Right ventricle myocardium inferior (tissue), 1 donor: ENCODE measurements at regions of chrX and their contacts with region 1.

Region 1: GRCh38 chrX:68929332-68930150 is 100.7 kb downstream of the EFNB1 start:
- DNase-seq: no peak
- ATAC-seq: peak; percentile 29

Region 2: DNA sequence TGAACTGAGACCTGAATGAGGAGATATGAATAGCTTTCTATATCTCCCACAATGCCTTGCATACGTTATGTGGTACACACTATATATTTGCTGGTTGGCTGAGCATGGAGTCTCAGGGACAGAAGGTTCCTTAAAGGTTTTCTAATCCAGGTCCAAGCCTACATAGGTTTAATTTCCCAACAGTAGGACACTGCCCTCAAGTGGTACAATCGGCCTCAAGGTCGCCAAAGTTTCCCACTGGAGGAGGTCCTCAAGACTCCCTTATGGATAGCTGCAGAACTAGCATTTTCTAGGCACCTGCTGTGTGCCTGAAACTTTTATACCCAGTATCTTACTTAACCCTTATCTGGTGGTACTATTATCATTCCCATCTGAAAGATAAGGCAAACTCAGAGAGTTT is 121.7 kb before region 1 on chrX:
- intact Hi-C with region 1: no loop called
- DNase-seq: no peak
- ATAC-seq: no peak

Region 3: DNA sequence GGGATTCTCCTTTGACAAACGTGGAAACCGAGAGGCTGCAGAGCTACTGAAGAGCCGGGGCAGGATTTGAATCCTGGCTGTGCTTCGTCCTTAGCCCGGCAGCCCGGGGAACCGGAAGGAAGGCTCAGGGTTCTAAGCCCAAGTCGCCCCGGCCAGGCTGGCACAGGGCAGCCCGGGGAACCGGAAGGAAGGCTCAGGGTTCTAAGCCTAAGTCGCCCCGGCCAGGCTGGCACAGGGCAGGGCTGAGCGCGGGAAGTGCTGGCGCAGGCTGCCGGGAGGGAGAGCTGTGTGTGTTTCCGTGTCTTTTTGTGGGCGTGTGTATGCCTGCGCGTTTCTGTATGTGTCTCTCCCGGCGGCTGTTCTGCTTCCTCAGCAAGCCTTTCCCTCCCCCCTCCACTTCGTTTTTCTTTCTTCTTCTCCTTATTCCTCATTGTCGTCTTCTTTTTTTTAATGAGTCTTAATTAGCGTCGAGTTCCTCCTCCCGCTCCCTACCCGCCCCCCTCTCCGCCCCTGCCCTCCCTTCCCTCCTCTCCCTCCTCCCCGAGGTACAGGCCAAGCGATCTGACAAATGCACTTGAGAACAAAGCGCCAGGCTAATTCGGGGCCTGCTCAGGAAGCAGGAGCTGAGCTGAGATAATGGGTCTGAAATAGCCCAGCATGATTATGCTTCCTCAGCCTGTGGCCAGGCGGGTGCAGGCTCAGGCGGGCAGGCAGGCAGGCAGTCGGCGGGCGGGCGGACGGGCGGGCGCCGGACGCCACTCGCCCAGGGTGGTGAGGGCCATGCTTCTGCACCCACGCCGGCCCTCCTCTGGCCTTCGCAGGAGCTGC is 34.8 kb before region 1 on chrX:
- intact Hi-C with region 1: loop called (anchors 5 kb)
- DNase-seq: peak; percentile 80
- ATAC-seq: peak; percentile 89

Region 4: DNA sequence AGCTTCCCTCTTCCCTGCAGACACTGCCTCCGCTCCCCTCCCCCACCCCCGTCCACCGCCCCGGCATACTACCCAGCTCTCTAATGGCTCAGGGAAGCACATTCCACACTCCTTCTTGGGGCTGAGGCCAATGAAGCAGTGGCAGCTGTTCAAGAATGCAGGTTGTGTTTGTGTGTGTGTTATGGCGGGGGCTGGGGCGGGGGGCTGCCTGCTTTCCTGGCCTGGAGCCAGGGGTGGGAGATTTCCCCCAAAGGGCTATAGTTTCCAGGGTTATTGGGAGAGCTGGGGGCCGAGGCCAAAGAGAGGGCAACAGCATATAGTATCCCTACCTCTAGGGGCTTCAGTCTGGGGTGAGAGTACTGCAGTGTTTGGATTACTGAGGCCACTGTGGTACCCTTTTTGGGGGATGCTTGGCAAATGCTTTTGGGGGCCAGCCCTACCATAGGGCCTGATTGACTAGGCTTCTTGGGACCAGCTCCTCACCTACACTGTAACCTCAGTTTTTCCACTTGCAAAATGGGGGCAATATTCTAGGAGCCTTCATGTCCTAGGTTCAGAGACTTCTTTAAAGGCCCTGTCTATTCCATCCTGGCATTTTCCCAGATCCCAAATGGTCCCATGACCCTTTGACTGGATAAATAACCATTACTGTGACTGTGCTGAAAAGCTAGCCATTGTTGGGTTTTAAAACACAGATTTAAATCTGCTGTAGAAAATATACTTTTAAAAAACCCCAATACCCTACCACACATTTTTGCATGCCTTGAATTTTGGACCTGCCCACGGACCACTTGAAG is 48.9 kb after region 1 on chrX:
- intact Hi-C with region 1: no loop called
- DNase-seq: no peak
- ATAC-seq: no peak